Activated B cell treated with CpG ODN at 0.5 μM for 24 hours (primary cell): ENCODE measurements at regions of chr3 and their contacts with region 1.

Region 1: GRCh38 chr3:50617096-50617791 is at the start of gene MAPKAPK3:
- DNase-seq: peak; percentile 62
- ATAC-seq: peak; percentile 19
- H3K4me3 Mint-ChIP-seq: peak within 1 kb of the TSS; percentile 91
- H3K27ac Mint-ChIP-seq: peak within 1 kb of the TSS; percentile 88
- H3K4me1 Mint-ChIP-seq: peaks cover 51% of the 10 kb centered on the region
- H3K27me3 Mint-ChIP-seq: no peaks in the 10 kb centered on the region
- CTCF ChIP-seq: no peak
- total RNA-seq, gene MAPKAPK3: 18.2 and 20.3 TPM in 2 replicates

Region 2: DNA sequence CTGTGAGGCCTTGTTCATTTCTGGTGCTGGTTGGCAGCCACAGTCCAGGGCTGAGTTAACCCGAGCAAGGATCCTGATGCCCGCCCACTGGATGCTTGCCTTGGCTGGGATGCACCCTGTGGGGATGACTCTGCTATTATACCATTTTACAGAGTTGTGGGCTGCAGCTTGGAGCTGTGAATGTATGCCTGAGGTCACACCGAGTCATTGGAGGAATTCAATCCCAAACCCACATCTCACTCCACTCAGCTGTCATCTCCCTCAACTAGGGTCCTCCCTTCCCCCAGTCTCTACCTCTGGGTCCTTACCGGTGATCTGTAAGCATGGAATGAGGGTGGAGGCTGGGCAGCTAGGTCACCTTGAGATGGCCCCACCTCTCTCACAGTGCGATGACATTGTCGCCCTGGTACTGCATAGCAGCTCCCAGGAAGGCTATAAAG is 21.8 kb after region 1 on chr3:
- CTCF ChIA-PET with region 1: no interaction called
- POLR2A ChIA-PET with region 1: no interaction called
- intact Hi-C with region 1: no loop called
- DNase-seq: no peak
- ATAC-seq: no peak
- H3K4me3 Mint-ChIP-seq: no peak overlapping the region
- H3K27ac Mint-ChIP-seq: no peak overlapping the region
- H3K4me1 Mint-ChIP-seq: no peaks in the 10 kb centered on the region
- H3K27me3 Mint-ChIP-seq: no peaks in the 10 kb centered on the region
- CTCF ChIP-seq: no peak

Region 3: DNA sequence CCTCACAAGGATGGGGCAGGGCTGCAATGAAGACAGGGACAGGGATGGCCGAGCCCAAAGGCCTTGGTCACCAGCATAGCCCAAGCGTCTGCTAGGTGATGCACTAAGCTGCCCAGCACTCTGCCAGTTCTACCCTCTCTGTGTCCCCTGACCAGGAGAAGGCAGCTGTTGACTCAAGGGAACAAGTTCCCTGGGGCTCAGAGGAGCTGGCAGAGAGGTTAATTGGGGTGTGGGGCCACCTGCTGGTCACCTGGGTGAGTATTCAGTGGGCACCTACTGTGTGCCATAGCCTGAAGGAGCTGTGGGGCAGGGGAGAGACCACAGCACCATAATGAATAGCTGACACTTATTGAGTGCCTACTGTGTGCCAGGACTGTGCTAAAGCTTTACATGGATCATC is 35.5 kb after region 1 on chr3:
- CTCF ChIA-PET with region 1: interaction called, 60 read pairs
- POLR2A ChIA-PET with region 1: interaction called, 5 read pairs
- intact Hi-C with region 1: loop called (anchors 1 kb)
- DNase-seq: peak; percentile 33
- ATAC-seq: peak; percentile 60
- H3K4me3 Mint-ChIP-seq: no peak overlapping the region
- H3K27ac Mint-ChIP-seq: no peak overlapping the region
- H3K4me1 Mint-ChIP-seq: no peaks in the 10 kb centered on the region
- H3K27me3 Mint-ChIP-seq: peaks cover 1% of the 10 kb centered on the region
- CTCF ChIP-seq: no peak